ENCODE measurements at regions of chr3 and their contacts with region 1.

Region 1: GRCh38 chr3:130759699-130760338 is 13.2 kb upstream of the PIK3R4 start:
- DNase-seq: peak; percentile 42
- ATAC-seq: peak; percentile 92

Region 2: DNA sequence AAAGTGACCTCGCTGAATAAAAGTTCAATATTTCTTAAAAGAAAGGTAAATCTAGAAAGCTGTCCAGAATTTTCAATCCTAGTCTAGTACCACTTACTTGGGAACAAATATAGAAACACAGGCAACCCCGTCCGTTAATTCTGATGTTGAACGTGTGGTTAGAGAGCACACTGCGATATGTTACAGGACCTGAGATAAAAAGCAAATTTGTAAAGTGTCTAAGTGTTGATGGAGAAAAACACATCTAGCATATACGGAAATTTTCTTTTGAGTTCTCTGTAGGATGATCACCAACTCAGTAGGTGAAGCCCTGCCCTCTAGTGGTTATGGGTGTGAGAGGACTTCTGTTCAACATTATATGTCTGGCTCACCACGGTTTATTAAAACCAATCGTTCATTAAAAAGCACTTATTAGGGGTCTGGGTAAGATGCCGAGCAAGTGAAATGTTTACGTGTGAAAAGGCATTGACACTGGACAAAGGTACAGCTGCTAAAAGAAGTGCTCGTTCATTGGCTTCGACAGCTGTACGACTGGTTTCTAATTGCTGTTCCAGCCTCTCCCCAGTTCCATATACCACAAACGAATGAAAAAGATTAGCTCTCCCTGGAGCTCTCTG is 133.0 kb after region 1 on chr3:
- intact Hi-C with region 1: loop called (anchors 5 kb)
- DNase-seq: no peak
- ATAC-seq: peak; percentile 82

Measured in Right ventricle myocardium superior (tissue), 1 donor.